ENCODE measurements at regions of chr12 and their contacts with region 1.

Region 1: DNA sequence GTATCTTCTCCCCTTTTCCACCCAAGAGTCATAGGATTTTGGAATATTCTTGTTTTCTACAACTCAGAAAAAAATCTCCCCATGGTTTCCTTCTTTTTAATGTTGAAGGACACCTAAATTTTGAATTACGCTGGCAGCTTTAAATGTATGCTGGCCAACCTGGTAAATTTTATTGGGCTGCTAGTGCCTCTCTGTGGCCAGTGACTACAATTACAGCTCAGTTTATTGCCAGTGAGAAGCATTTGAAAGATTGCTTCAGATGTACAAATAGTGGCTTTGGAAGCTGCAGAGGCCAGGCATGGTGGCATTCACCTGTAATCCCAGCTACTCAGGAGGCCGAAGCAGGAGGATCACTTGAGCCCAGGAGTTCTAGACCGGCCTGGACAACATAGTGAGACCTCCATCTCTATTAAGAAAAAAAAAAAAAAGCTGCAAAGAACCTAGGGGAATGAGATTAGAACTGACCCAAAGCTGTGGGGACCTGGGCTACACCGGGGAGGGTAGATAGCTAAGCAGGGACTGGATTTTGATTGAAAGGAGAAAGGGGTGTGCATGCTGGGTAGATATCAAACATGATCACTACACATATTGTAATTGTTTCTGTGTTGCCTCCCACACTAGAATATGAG is 7.6 kb upstream of the RAB21 start:
- DNase-seq: peak; percentile 62
- ATAC-seq: peak; percentile 79
- H3K4me3 Mint-ChIP-seq: no peak overlapping the region
- H3K27ac Mint-ChIP-seq: no peak overlapping the region
- H3K4me1 Mint-ChIP-seq: no peaks in the 10 kb centered on the region
- H3K27me3 Mint-ChIP-seq: peaks cover 10% of the 10 kb centered on the region

Region 2: DNA sequence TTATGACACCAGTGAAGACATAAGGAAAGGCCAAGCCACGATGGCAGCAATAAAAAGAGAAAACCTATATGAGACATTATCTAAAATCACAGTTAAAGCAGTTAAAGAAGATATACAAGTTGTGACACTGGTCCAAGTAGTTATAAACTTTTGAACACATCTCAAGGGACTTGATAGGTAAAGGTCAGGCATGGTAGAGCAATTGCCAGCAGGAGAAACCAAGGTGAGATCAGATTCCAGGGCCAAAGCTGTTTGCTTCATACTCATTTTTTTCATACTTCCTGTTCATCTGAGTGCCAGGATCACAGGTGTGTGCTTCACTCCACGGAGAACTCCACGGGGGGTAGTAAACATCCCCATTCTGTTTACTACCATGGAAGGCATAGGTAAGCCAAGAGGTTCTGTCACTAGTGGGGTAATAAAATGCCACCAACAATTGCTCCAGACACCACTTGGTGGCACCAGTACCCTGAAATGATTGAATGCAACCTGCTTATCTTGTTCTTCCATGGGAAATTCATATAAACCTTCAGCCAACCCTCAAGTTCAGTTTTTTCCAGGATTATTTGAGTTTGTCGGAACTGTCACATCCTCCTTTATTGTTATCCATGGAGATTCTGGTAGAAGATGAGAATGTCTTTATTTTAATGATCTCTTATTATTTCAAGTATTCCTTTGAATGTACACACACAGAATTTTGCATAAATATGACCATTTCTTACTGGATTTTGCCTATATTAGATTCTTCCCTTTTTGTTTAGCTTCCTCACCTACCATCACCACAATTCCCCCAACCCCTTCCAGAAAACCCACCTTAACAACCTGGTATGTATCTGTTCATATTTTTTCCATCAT is 530.1 kb before region 1 on chr12:
- CTCF ChIA-PET with region 1: no interaction called
- POLR2A ChIA-PET with region 1: no interaction called
- intact Hi-C with region 1: loop called in 1 of 2 experiments (anchors 2 kb)
- DNase-seq: no peak
- ATAC-seq: no peak
- H3K4me3 Mint-ChIP-seq: no peak overlapping the region
- H3K27ac Mint-ChIP-seq: no peak overlapping the region
- H3K4me1 Mint-ChIP-seq: no peaks in the 10 kb centered on the region
- H3K27me3 Mint-ChIP-seq: no peaks in the 10 kb centered on the region

Region 3: GRCh38 chr12:71415336-71416231 is 331.5 kb before region 1 on chr12:
- CTCF ChIA-PET with region 1: interaction called, 73 read pairs
- POLR2A ChIA-PET with region 1: no interaction called
- intact Hi-C with region 1: loop called (anchors 1 kb)
- DNase-seq: peak; percentile 24
- ATAC-seq: peak; percentile 64
- H3K4me3 Mint-ChIP-seq: no peak overlapping the region
- H3K27ac Mint-ChIP-seq: no peak overlapping the region
- H3K4me1 Mint-ChIP-seq: no peaks in the 10 kb centered on the region
- H3K27me3 Mint-ChIP-seq: peaks cover 7% of the 10 kb centered on the region

Region 4: GRCh38 chr12:71636704-71637115 is 110.4 kb before region 1 on chr12:
- CTCF ChIA-PET with region 1: interaction called, 46 read pairs
- POLR2A ChIA-PET with region 1: no interaction called
- intact Hi-C with region 1: loop called (anchors 2 to 5 kb)
- DNase-seq: no peak
- ATAC-seq: peak; percentile 43
- H3K4me3 Mint-ChIP-seq: no peak overlapping the region
- H3K27ac Mint-ChIP-seq: peak overlapping the region; percentile 73
- H3K4me1 Mint-ChIP-seq: peaks cover 21% of the 10 kb centered on the region
- H3K27me3 Mint-ChIP-seq: no peaks in the 10 kb centered on the region

Region 5: DNA sequence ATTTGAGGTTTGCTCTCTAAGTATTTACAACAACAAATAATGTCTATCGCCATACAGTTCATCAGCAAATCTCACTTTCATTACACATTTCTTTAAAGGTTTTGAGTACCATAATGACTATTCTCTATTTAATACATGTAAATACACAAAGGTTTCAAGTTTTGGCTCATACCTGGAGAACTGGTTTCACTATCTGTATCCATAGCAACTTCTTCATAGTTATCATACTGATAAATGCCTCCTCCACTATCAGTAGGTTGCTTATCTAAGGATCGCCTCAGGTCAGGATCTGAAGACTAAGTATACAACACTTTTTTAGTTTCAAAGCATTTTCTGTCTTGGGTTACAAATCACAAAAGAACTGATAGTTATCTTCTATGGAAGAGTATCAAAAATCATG is 104.8 kb before region 1 on chr12:
- CTCF ChIA-PET with region 1: interaction called, 46 read pairs
- POLR2A ChIA-PET with region 1: no interaction called
- intact Hi-C with region 1: loop called (anchors 2 to 5 kb)
- DNase-seq: no peak
- ATAC-seq: peak; percentile 78
- H3K4me3 Mint-ChIP-seq: no peak overlapping the region
- H3K27ac Mint-ChIP-seq: peak overlapping the region; percentile 65
- H3K4me1 Mint-ChIP-seq: peaks cover 47% of the 10 kb centered on the region
- H3K27me3 Mint-ChIP-seq: no peaks in the 10 kb centered on the region